ENCODE measurements at regions of chr1 and their contacts with region 1.

Region 1: DNA sequence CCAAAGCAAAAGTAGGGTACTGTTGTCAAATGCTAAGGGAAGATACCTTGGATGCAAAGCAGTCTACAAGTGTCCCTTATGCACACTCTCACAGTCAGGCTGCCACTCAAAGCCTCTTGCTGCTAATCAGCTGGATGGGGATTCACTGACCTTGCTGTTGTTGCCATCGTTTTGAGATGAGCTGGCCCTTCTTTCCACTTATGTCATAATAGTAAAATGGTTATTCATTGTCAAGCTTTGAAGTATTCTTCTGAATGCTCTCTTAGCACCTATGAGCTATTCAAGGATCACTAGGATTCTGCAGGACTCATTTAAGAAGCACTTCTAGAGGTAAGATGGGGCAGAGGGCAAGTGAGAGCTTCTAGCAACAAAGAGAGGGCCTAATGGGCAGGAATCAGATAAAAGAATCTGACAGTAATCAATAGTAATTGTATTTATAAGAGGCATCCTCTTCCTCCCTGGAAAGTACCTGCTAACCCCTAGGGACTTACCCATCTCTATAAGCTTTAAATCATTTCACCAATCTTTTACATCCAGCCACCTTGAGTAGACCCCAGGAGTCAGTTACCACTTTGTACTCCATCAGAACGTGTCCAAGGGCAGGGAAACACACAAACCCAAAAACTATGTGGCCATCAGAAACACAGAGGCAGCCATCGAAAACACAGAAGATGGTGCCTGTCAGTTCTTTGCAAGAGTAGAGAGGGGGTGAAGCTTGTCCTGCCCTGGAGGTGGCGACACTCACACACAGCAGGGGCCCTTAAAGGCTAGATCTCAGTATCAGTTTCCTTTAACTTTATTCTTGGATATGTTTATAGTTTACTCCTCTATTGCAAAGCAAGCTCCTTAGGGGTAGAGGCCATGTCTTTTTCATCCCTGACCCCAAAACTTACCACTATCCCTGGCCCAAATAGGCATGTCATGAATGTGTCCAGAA is 103.7 kb upstream of the NFIA start:
- DNase-seq: peak; percentile 27
- CTCF ChIP-seq: no peak

Region 2: GRCh38 chr1:60989749-60990713 is 11.3 kb after region 1 on chr1:
- CTCF ChIA-PET with region 1: interaction called, 21 read pairs
- POLR2A ChIA-PET with region 1: interaction called, 5 read pairs
- DNase-seq: no peak
- CTCF ChIP-seq: no peak

Measured in GM10248 (cell line).